ENCODE measurements at regions of chr18 and their contacts with region 1.

Region 1: GRCh38 chr18:63253428-63254372 is 65.9 kb downstream of the BCL2 start:
- DNase-seq: no peak
- H3K4me3 Mint-ChIP-seq: no peak overlapping the region
- H3K27ac Mint-ChIP-seq: peak overlapping the region; percentile 79
- H3K4me1 Mint-ChIP-seq: peaks cover 78% of the 10 kb centered on the region
- H3K27me3 Mint-ChIP-seq: no peaks in the 10 kb centered on the region

Region 2: GRCh38 chr18:63199743-63200241 is 53.9 kb before region 1 on chr18:
- intact Hi-C with region 1: loop called (anchors 5 kb)
- DNase-seq: peak; percentile 60
- H3K4me3 Mint-ChIP-seq: no peak overlapping the region
- H3K27ac Mint-ChIP-seq: no peak overlapping the region
- H3K4me1 Mint-ChIP-seq: peaks cover 25% of the 10 kb centered on the region
- H3K27me3 Mint-ChIP-seq: no peaks in the 10 kb centered on the region

Region 3: DNA sequence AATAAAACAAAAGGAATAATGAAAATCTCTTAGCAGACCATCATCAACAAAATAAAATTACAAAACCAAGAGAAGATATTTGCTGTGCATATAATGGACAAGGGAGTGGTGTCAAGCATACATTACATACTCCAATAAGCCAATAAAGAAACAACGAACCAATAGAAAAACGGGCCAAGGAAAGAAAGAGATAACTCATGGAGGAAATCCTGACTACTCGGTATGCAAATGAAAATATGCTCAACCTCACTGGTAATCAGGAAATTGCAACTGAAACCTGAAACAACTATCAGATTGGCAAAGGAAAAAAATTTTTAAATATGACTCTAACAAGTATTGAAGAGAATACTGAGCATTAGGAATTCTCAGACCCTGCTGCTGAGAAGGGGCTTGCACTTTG is 18.9 kb before region 1 on chr18:
- intact Hi-C with region 1: loop called (anchors 2 kb)
- DNase-seq: no peak
- H3K4me3 Mint-ChIP-seq: peak overlapping the region; percentile 2
- H3K27ac Mint-ChIP-seq: peak overlapping the region; percentile 70
- H3K4me1 Mint-ChIP-seq: peaks cover 76% of the 10 kb centered on the region
- H3K27me3 Mint-ChIP-seq: no peaks in the 10 kb centered on the region

Region 4: GRCh38 chr18:63292831-63293683 is 39.4 kb after region 1 on chr18:
- intact Hi-C with region 1: loop called (anchors 2 kb)
- DNase-seq: no peak
- H3K4me3 Mint-ChIP-seq: peak overlapping the region; percentile 46
- H3K27ac Mint-ChIP-seq: peak overlapping the region; percentile 86
- H3K4me1 Mint-ChIP-seq: peaks cover 65% of the 10 kb centered on the region
- H3K27me3 Mint-ChIP-seq: no peaks in the 10 kb centered on the region

Region 5: GRCh38 chr18:63299837-63300745 is 46.4 kb after region 1 on chr18:
- intact Hi-C with region 1: loop called (anchors 2 kb)
- DNase-seq: no peak
- H3K4me3 Mint-ChIP-seq: peak overlapping the region; percentile 76
- H3K27ac Mint-ChIP-seq: peak overlapping the region; percentile 96
- H3K4me1 Mint-ChIP-seq: peaks cover 91% of the 10 kb centered on the region
- H3K27me3 Mint-ChIP-seq: no peaks in the 10 kb centered on the region

Region 6: DNA sequence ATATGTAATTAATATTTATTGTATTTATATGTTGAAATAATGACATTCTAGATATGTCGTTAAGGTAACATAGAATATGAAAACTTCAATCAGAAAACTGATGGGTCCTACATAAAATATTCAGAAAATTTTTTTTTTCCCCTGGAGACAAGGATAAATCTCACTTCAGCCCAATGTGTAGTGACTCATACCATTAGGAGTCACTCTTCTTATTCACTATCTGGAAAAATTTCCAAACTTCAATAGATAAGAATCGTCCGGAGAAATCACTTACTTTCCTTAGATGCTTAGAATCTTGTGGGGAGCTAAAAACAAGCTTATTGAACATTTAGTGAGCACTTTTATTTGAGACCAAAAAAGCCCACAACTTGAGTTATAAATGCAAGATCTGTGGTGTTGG is 338.0 kb after region 1 on chr18:
- intact Hi-C with region 1: no loop called
- DNase-seq: no peak
- H3K4me3 Mint-ChIP-seq: no peak overlapping the region
- H3K27ac Mint-ChIP-seq: no peak overlapping the region
- H3K4me1 Mint-ChIP-seq: no peaks in the 10 kb centered on the region
- H3K27me3 Mint-ChIP-seq: peaks cover 4% of the 10 kb centered on the region

Measured in activated T-helper 1 cell treated with anti-CD3 and anti-CD28 coated beads, Interleukin-12 subunit alpha, Interleukin-12 subunit beta, Interleukin-2, Interleukin-4 antibody, amounts not matched to agents 30 ng/mL and 10 ng/mL and 1 ng/mL, durations not matched to agents 14 hours and 24 hours and 36 hours (primary cell).